ENCODE measurements at regions of chrX and their contacts with region 1.

Region 1: DNA sequence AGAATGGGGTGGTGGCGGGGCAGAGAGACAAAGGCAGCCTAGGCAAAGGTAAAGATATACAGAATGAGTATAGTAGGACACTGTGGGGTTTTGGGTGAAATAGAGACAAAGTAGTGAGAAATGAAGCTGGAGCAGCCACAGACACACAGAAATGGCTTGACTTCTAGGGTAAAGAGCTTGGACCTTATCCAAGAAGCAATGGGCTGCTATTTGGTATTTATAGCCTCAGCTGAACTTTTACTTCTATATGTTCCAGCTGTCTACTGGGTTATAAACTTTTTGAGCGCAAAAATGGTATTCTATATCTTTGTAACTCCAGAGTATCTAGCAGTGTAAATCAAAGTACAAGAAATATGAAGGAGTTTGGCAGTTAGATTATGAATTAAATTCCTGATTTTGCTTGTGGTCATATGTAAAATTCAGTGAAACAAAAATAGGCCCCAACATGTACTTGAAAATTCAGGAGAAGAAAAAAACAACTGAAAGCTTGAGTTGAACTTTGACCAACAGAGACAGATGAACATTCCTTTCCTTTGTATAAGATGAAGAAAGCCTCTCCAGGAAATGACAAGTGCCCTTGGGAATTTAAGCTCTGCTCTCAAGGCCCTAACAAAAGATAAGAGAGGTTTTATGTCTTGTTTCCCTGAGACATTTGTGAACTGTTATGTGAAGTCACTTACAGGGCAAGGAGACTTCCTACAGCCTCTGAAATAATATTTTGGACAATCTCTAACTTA is 354.1 kb downstream of the CHIC1 start:
- DNase-seq: peak; percentile 90
- H3K4me3 ChIP-seq: no peak overlapping the region
- H3K27ac ChIP-seq: peak overlapping the region; percentile 95
- H3K4me1 ChIP-seq: peaks cover 45% of the 10 kb centered on the region
- H3K27me3 ChIP-seq: no peaks in the 10 kb centered on the region
- CTCF ChIP-seq: no peak
- POLR2A ChIP-seq: peak; percentile 41

Region 2: GRCh38 chrX:73943693-73944562 is 26.8 kb after region 1 on chrX:
- CTCF ChIA-PET with region 1: interaction called, 3 read pairs
- POLR2A ChIA-PET with region 1: no interaction called
- dilution Hi-C with region 1: no loop called
- intact Hi-C with region 1: loop called (anchors 1 kb)
- DNase-seq: peak; percentile 85
- H3K4me3 ChIP-seq: peak overlapping the region; percentile 87 to 99 (median 89)
- H3K27ac ChIP-seq: peak overlapping the region; percentile 98
- H3K4me1 ChIP-seq: peaks cover 11% of the 10 kb centered on the region
- H3K27me3 ChIP-seq: no peaks in the 10 kb centered on the region
- CTCF ChIP-seq: no peak
- POLR2A ChIP-seq: peak; percentile 77

Region 3: DNA sequence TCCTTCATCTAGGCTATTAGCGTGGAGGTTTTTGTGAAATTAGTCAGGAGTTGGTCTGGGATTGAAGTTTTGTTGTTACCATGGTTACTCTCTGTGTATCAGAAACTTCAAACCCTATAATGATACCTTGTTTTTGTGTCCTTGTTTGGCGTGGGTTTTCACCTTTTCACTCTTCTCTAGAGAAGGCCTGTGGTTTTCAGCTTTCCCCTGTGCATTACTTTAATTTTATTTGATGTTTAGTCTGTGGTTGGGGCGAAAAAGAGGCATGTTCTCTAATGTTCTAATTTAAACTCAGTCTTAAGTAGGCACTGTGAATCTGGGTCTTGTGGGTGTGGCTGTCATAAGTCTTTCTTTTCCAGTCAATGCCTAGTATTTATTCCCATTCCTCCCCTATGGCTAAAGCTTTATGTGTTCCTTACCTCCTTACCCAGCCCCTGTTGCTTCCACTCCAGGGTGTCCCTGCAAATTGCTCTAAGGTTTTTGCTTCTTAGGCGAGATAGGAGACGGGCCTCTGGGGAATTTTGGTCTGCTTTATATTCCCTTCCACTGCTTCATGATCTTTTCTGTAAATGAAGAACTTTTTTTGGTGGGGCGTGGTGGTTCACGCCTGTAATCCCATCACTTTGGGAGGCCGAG is 60.6 kb after region 1 on chrX:
- CTCF ChIA-PET with region 1: no interaction called
- POLR2A ChIA-PET with region 1: no interaction called
- dilution Hi-C with region 1: no loop called
- intact Hi-C with region 1: loop called (anchors 2 kb)
- DNase-seq: no peak
- H3K4me3 ChIP-seq: no peak overlapping the region
- H3K27ac ChIP-seq: no peak overlapping the region
- H3K4me1 ChIP-seq: peaks cover 2% of the 10 kb centered on the region
- H3K27me3 ChIP-seq: no peaks in the 10 kb centered on the region
- CTCF ChIP-seq: no peak
- POLR2A ChIP-seq: no peak

Region 4: DNA sequence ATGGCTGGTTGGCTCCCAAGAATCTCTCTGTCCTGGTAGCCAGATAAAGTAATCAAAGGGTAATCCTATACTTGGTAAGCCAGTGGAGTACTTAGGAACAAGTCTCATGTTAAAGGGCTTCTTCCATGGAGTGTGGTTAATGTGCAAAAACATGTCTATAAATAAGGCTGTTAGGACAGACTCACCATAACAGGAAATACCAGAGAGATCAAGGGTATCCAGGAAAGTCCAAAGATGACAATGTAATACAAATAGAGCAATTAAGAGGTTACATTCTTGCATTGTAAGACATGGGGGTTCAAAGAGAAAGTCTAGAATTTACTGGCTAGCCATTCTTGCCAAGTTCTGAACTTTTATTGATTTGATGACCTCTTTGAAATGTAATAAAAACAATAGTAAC is 325.0 kb after region 1 on chrX:
- CTCF ChIA-PET with region 1: no interaction called
- POLR2A ChIA-PET with region 1: no interaction called
- dilution Hi-C with region 1: no loop called
- intact Hi-C with region 1: loop called (anchors 2 kb)
- DNase-seq: peak; percentile 83
- H3K4me3 ChIP-seq: no peak overlapping the region
- H3K27ac ChIP-seq: peak overlapping the region; percentile 97
- H3K4me1 ChIP-seq: peaks cover 32% of the 10 kb centered on the region
- H3K27me3 ChIP-seq: no peaks in the 10 kb centered on the region
- CTCF ChIP-seq: no peak
- POLR2A ChIP-seq: no peak

Measured in endothelial cell of umbilical vein (primary cell).